OCI-LY7 (cell line): ENCODE measurements at regions of chr15 and their contacts with region 1.

Region 1: DNA sequence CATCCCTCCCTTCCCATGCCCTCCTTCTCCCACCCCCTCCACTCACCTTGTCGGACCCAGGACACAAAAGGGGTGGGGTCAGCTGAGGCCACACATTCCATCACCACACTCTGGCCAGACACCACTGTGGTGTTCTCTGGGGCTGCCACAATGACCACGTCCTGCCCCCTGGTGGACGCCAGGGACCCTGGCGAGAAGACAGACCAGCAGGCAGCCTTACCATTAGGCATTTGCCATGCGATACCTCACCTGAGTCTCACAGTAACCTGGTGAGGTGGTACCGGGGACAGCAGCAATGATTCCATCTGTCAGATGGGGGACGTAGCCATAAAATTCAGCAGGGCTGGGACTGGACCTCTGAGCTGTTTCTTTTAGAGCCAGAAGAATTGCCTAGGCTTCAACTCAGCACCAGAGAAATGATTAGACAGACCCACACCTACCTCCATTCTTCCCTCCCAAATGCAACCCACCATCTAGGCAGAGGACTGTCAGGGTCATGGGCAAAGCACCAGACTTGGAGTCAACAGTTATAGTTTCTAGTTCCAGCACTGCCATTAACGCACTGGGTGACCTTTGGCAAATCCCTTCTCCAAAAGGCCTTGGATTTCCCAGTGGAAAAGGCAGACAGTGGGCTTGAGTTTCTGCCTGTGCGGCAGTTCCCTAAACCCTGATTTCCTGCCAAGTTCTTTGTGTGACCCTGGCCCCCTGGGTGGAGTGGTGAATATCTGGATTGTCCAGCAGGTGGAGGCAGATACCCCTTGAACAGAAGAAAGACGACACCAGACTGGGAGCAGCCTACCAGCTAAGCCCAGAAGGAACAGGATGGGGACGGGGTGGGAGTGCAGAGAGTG is 21.8 kb downstream of the IGDCC4 start:
- DNase-seq: peak; percentile 65
- H3K4me3 ChIP-seq: no peak overlapping the region
- H3K27ac ChIP-seq: no peak overlapping the region
- H3K4me1 ChIP-seq: no peaks in the 10 kb centered on the region
- CTCF ChIP-seq: peak; percentile 70

Region 2: DNA sequence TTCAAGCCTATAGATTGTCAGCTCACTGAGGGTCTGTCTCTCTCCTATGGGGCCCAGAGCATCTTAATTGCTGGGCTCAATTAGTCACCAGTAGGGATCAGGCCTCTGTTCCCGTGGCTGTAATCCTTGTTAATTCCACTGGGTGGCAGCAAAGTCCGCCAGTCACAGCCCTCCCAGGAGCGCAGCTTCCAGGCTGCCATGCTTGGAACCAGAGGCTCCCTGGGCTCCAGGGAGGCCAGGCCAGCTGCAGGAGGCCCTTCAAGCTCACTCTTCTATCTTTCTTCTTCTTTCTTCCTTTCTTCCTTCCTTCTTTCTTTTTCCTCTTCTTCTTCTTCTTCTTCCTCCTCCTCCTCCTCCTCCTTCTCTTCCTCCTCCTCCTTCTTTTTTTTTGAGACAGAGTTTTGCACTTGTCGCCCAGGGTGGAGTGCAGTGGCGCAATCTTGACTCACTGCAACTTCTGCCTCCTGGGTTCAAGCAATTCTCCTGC is 82.1 kb before region 1 on chr15:
- CTCF ChIA-PET with region 1: no interaction called
- POLR2A ChIA-PET with region 1: no interaction called
- intact Hi-C with region 1: loop called (anchors 1 kb)
- DNase-seq: peak; percentile 75
- H3K4me3 ChIP-seq: no peak overlapping the region
- H3K27ac ChIP-seq: no peak overlapping the region
- H3K4me1 ChIP-seq: no peaks in the 10 kb centered on the region
- CTCF ChIP-seq: peak; percentile 90

Region 3: DNA sequence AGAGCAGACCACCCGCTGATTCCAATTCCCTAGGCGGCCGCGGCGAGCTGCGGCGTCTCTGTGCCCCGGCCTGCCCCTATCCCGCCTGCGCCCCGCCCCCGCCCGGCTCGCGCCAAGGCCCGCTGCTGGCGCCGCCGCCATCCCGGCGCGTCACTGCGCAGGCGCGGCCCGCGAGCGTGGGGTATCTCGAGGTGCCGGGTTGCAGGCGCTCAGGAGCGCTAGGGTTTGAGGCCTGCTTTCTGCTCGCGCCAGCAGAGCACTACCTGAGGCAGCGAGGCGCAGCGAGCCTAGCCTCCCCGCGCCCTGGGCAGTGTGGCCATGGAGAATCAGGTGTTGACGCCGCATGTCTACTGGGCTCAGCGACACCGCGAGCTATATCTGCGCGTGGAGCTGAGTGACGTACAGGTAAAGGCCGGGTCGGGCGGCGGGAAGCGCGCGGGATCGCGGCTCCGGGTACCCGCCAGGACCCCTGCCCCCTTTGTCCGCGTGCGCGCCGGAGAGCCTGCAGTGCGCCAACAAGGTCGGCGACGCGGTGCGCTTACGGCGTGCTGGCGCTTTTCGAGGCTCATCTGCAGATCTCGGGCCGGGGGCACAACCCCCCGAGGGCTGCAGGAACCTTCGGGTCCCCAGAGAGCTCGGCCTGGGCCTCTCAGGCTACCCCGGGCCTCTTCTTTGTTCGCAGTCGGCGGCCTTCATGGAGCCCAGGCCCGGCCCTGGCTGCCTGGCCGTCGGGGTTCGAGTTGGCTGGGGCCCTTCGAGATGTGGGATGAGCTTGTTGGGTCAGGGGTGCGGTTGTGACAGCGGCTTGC is 129.5 kb after region 1 on chr15 and contains the start of gene HACD3:
- CTCF ChIA-PET with region 1: interaction called, 13 read pairs
- POLR2A ChIA-PET with region 1: no interaction called
- intact Hi-C with region 1: no loop called
- DNase-seq: peak; percentile 82
- H3K4me3 ChIP-seq: peak within 1 kb of the TSS; percentile 79
- H3K27ac ChIP-seq: peak within 1 kb of the TSS; percentile 54
- H3K4me1 ChIP-seq: peaks cover 27% of the 10 kb centered on the region
- CTCF ChIP-seq: no peak
- total RNA-seq, gene HACD3: 29.2 and 34.7 TPM in 2 replicates